ENCODE measurements at regions of chr16 and their contacts with region 1.

Region 1: GRCh38 chr16:4330277-4330874 is 14.5 kb downstream of the GLIS2 start:
- DNase-seq: peak; percentile 80
- H3K4me3 Mint-ChIP-seq: no peak overlapping the region
- H3K27ac Mint-ChIP-seq: no peak overlapping the region
- H3K4me1 Mint-ChIP-seq: peaks cover 4% of the 10 kb centered on the region
- H3K27me3 Mint-ChIP-seq: no peaks in the 10 kb centered on the region

Region 2: GRCh38 chr16:3358884-3359283 is 971.5 kb before region 1 on chr16:
- CTCF ChIA-PET with region 1: no interaction called
- intact Hi-C with region 1: no loop called
- DNase-seq: no peak
- H3K4me3 Mint-ChIP-seq: no peak overlapping the region
- H3K27ac Mint-ChIP-seq: no peak overlapping the region
- H3K4me1 Mint-ChIP-seq: no peaks in the 10 kb centered on the region
- H3K27me3 Mint-ChIP-seq: peaks cover 3% of the 10 kb centered on the region

Region 3: GRCh38 chr16:3938848-3939624 is 391.3 kb before region 1 on chr16:
- CTCF ChIA-PET with region 1: no interaction called
- intact Hi-C with region 1: loop called (anchors 1 kb)
- DNase-seq: peak; percentile 66
- H3K4me3 Mint-ChIP-seq: peak overlapping the region; percentile 21
- H3K27ac Mint-ChIP-seq: no peak overlapping the region
- H3K4me1 Mint-ChIP-seq: peaks cover 1% of the 10 kb centered on the region
- H3K27me3 Mint-ChIP-seq: peaks cover 4% of the 10 kb centered on the region

Region 4: GRCh38 chr16:3983081-3983520 is 347.3 kb before region 1 on chr16:
- CTCF ChIA-PET with region 1: no interaction called
- intact Hi-C with region 1: loop called (anchors 10 kb)
- DNase-seq: peak; percentile 73
- H3K4me3 Mint-ChIP-seq: no peak overlapping the region
- H3K27ac Mint-ChIP-seq: no peak overlapping the region
- H3K4me1 Mint-ChIP-seq: peaks cover 4% of the 10 kb centered on the region
- H3K27me3 Mint-ChIP-seq: no peaks in the 10 kb centered on the region

Region 5: GRCh38 chr16:4140652-4141051 is 189.7 kb before region 1 on chr16:
- CTCF ChIA-PET with region 1: no interaction called
- intact Hi-C with region 1: no loop called
- DNase-seq: peak; percentile 18
- H3K4me3 Mint-ChIP-seq: no peak overlapping the region
- H3K27ac Mint-ChIP-seq: peak overlapping the region; percentile 59
- H3K4me1 Mint-ChIP-seq: peaks cover 8% of the 10 kb centered on the region
- H3K27me3 Mint-ChIP-seq: peaks cover 4% of the 10 kb centered on the region

Region 6: DNA sequence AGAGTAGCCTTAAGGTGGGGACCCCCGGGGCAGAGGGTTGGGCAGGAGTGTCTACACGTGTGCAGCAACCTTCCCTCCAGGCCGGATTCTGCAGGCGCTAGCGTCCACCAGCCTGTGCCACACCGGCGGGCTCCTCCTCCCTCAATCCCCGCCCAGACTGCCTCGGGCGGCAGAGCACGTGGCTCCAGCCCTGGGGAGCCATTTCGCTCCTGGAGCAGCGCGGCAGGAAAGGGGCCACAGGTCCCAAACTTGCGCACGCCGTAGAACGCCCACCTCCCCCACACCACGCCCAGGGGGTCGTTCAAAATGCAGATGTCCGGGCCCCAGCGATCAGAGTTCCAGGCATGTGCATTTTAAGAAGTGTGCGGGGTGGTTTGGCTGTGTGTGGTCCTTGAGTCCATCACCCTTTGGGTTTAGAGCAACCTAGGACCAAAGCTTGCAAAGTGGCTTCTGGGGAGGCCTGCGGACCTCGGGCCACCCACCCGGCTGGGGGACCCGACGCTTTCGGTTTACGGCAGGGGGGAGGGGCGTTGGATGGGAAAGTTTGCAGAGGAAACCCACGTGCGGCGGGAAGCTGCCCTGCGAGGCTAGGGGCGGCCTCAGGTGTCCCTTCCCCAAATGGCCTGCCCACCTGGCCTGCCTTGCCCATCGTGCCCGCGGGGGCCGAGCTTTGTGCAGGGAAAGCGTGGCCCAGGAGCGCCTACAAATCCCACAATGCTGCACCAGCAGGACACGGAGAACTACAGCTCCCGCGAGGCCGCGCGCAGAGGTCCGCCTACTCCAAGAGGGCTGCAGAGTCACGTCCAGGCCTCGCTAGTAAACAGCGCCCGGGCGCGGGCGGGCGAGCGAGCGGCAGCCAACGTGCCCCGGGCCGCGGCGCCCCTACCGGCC is 59.0 kb before region 1 on chr16:
- CTCF ChIA-PET with region 1: interaction called, 8 read pairs
- intact Hi-C with region 1: loop called (anchors 5 kb)
- DNase-seq: peak; percentile 95
- H3K4me3 Mint-ChIP-seq: peak overlapping the region; percentile 86
- H3K27ac Mint-ChIP-seq: peak overlapping the region; percentile 94
- H3K4me1 Mint-ChIP-seq: peaks cover 12% of the 10 kb centered on the region
- H3K27me3 Mint-ChIP-seq: no peaks in the 10 kb centered on the region

Region 7: DNA sequence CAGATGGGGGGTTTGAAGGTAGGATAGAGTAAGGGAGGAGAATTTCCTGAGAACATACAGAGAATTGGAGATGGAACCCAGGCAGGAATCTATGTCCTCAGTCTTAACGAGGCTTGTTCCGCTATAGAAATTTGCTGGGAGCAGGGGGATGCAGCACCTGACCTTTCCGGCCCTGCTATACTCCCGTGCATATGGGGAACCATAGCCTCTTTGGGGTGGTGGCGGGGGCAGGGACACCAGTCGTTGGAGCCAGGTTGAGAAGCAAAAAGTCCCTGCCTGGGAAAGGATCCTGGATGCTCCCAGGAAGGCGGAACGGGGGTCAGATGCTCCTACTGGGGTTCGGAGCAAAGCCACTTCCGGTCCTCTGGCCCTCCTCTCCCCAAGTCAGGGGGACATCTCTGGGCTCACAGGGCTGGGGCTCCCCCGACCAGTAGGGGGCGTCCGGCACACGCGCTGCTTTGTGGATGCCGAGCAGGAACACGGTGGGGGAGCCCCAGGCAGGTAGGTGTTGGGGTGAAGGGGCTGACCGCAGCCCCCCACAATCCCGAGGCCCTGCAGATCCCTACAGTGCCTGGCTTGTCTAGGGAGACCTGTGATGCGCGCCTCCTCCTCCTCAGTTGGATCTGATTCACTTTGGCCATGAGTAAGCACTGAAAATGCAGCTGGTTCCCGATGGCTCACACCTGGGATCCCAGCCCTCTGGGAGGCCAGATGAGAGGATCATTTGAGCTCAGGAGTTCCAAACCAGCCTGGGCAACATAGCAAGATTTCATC is 42.0 kb before region 1 on chr16:
- CTCF ChIA-PET with region 1: interaction called, 80 read pairs
- intact Hi-C with region 1: loop called (anchors 1 kb)
- DNase-seq: peak; percentile 84
- H3K4me3 Mint-ChIP-seq: no peak overlapping the region
- H3K27ac Mint-ChIP-seq: no peak overlapping the region
- H3K4me1 Mint-ChIP-seq: peaks cover 9% of the 10 kb centered on the region
- H3K27me3 Mint-ChIP-seq: peaks cover 9% of the 10 kb centered on the region

Region 8: DNA sequence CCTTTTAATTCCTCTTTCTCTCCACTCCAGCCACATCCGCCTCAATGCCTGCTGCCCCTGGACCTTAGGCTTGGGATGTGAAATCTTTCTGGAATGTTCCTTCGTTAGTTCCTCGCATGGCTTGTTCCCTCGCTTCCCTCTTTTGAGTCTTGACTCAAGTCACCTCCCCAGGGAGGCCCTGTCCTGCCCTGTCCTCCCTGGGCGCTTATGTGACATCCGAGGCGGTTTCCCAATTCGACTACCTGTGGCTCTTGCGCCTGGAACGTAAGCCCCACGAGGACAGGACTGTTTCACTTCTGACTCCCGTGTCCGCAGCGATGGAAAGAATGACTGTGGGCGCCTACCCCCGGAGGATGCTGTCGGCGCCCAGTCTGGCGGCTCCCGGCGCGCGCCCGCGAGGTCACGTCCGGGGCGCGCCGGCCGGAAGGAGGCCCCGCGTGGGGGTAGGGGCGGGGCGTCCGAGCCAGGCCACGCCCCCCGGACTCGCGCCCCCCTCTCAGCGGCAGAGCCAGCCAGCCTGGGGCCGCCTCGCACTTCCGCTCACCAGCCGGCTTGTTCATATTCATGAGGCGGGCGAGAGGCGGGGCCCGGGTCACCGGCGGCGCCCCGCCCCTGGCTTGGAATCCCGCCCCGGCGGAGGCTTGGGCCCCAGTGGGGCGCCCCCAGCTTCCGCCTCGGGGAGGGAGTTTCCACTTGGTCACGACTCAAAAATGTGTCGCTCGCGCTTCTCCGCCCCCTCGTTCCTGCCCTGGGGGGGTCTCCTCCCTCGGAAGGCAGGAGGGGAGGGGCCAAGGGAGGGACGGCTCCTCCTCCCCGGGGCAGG is 22.9 kb before region 1 on chr16:
- CTCF ChIA-PET with region 1: interaction called, 10 read pairs
- intact Hi-C with region 1: no loop called
- DNase-seq: peak; percentile 95
- H3K4me3 Mint-ChIP-seq: peak overlapping the region; percentile 84
- H3K27ac Mint-ChIP-seq: peak overlapping the region; percentile 85
- H3K4me1 Mint-ChIP-seq: peaks cover 24% of the 10 kb centered on the region
- H3K27me3 Mint-ChIP-seq: no peaks in the 10 kb centered on the region

Region 9: DNA sequence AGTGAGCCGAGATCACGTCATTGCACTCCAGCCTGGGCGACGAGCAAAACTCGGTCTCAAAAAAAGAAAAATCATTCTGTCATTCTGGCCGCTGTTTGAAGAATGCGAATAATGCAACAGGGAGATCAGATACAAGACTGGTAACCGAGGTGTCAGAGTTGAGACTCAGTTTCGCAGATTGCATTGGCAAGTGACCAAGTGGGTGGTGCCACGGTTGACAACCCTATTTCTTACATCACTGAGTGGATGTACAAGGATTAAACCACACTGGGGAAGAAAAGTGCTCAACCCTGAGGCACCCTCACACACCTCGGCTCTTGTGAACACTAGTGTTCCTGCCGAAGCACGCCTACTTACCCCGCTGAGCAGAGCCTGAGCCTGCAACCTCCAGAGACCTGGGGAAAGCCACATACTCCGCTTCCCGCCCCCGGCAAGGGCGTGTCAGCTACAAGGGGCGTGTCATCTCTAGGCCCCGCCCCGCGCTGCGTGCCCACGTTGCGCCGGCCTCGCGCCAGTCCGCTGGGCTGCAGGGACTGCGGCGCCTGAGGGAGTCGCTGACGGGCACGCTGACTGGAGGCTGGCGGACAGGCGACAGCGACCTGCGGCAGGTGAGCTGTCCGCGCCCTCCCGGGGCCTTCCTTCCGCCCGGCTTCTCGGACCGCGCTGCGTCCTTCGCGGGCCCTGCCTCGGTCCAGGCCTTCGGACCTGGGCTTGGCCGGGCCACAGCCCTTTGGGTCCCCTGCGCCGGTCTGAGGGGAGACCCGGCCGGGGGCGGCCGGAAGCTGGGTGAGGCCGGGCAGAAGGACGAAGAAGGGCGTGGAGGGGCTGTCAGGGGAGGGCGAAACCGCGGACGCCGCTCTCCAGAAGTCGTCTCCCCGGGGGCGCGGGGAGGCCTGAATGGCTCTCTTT is 145.8 kb after region 1 on chr16 and contains the start of gene HMOX2:
- CTCF ChIA-PET with region 1: no interaction called
- intact Hi-C with region 1: no loop called
- DNase-seq: peak; percentile 95
- H3K4me3 Mint-ChIP-seq: peak within 1 kb of the TSS; percentile 89
- H3K27ac Mint-ChIP-seq: peak within 1 kb of the TSS; percentile 82
- H3K4me1 Mint-ChIP-seq: peaks cover 42% of the 10 kb centered on the region
- H3K27me3 Mint-ChIP-seq: no peaks in the 10 kb centered on the region
- total RNA-seq, gene HMOX2: 46.8 to 49.3 TPM

Region 10: DNA sequence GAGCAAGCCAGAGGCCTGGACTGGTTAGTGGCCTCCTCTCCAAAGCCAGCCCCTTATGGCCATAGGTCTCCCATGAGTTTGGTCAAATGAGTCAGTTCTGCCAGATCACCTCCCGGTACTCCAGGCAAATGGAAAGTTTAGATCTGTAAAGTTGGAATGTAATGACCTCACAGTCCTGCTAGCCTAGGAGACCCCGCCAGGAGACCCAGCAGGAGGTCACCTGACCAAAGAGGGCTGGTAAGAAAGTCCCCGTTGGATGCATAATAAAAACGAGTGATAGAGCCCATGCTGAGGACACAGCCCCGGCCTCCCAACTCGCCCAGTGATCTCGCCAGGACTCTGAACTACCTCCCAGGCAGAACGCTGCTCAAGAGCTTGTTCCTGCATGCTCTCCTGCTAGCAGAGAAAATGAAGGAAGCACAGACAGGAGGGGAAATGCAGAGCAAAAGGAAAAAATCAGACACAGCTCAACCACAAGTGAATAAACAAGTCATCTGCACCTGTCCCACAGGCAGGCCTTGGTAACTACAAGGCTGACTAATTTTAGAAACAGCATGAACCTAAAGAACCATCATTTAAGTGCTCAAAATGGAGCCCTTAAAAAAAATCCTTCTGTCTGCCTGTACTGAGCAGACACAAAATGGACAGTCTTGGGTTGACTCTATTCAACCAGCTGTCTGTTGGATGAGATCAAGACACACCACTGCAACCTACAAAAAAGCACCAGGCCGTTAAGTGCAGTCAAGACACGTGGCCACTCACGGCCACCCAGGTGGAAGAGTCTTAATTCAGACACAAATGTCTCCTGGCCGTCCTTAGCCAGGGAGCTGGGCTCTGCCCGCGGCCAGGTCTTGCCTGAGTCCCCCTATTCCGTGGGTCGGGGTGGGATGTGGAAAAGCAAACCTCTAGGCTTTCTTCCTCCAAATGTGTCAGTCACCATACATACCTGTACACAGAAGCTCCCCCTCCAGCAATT is 199.0 kb after region 1 on chr16:
- CTCF ChIA-PET with region 1: no interaction called
- intact Hi-C with region 1: no loop called
- DNase-seq: peak; percentile 61
- H3K4me3 Mint-ChIP-seq: peak overlapping the region; percentile 37
- H3K27ac Mint-ChIP-seq: peak overlapping the region; percentile 81
- H3K4me1 Mint-ChIP-seq: peaks cover 43% of the 10 kb centered on the region
- H3K27me3 Mint-ChIP-seq: no peaks in the 10 kb centered on the region